ENCODE measurements at regions of chr2 and their contacts with region 1.

Region 1: GRCh38 chr2:218979846-218980734 is 4.9 kb downstream of the FEV start:
- DNase-seq: peak; percentile 87
- ATAC-seq: peak; percentile 94
- H3K4me3 Mint-ChIP-seq: no peak overlapping the region
- H3K27ac Mint-ChIP-seq: no peak overlapping the region
- H3K4me1 Mint-ChIP-seq: peaks cover 10% of the 10 kb centered on the region
- H3K27me3 Mint-ChIP-seq: peaks cover 83% of the 10 kb centered on the region

Region 2: DNA sequence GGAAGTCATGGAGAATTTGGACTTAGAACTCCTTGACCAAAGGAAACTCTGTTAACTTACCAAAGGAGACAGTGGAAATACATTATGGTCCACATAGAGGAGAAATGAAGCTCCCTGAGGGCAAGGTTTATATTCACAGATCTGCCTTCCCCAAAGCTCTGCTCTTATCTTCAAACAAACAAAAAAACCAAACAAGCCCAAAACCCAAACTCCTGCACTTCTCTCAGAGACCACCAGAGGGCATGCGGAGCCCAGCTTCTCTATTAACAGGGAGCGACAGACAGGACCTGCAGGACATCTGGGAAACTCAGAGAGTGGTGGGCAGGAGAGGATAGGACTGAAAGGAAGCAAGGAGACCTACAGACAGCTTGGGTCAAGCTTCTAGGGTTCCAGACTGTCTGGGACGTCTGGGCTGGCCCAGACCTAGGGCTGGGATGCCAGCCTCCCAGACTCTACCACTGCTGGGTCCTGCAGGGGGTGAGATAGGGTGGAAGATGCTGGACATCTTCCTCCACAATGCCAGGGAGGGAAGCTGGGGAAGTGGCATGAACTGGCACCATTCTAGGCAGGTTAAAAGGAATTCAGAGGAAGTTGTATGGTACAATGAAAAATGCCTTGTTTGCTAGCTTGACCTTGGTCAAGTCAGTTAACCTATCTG is 103.4 kb before region 1 on chr2:
- CTCF ChIA-PET with region 1: interaction called, 31 read pairs
- DNase-seq: peak; percentile 71
- ATAC-seq: no peak
- H3K4me3 Mint-ChIP-seq: no peak overlapping the region
- H3K27ac Mint-ChIP-seq: no peak overlapping the region
- H3K4me1 Mint-ChIP-seq: peaks cover 17% of the 10 kb centered on the region
- H3K27me3 Mint-ChIP-seq: peaks cover 78% of the 10 kb centered on the region

Region 3: DNA sequence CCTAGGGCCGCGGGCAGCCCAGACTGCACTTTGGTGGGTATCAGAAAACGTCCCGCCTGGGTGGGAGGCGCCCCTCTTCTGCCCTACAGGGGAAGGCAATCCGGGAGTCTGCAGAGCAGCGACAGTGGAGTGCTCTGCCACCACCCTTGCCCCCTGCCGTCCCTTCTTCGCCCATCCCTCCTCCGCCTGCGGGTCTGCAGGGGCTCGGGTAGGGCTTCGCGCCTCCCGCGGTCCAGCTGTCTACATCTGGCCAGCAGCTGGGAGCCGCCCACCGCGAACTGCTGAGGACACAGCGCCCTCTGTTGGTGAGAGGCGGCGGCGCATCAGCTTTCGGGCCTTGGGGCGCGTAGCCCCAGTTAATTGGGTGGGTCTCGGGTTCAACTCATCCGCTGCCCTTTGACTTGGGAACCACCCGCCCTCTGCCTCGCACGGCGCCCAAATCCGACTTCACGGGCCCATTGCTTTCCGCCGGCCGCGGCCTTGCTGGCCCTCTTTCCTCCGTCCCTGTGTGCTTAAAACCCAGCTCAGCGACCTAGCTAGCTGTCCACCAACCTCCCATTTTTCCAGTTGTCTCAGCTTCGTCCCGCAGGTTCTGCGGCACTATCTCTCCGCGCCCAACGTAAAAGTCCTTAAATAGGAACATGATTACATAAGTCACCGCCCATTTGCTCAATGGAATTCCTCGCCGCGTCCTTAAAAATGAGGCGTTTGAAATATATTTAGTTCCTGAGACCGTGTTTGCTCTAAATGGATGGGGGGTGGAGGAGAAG is 81.8 kb before region 1 on chr2:
- CTCF ChIA-PET with region 1: interaction called, 13 read pairs
- DNase-seq: peak; percentile 84
- ATAC-seq: peak; percentile 57
- H3K4me3 Mint-ChIP-seq: no peak overlapping the region
- H3K27ac Mint-ChIP-seq: no peak overlapping the region
- H3K4me1 Mint-ChIP-seq: peaks cover 39% of the 10 kb centered on the region
- H3K27me3 Mint-ChIP-seq: peaks cover 64% of the 10 kb centered on the region

Region 4: DNA sequence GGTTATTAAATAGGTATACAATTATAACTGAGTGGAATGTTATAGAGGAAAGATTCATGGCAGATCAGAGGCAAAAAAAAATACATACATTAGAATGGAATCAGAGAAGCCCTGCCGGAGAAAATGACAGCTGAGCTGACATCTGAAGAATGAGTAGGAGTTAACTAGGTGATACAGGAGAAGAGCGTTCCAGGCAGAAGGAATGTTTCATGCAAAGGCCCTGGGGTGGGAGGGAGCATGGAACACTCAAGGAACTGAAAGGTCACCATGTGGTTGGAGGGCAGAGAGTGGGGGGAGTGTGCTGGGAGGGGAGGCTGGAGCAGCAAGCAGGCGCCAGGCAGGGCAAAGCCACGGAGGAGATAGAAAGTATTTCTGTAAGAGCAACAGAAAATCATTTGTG is 52.2 kb before region 1 on chr2:
- CTCF ChIA-PET with region 1: no interaction called
- DNase-seq: no peak
- ATAC-seq: no peak
- H3K4me3 Mint-ChIP-seq: no peak overlapping the region
- H3K27ac Mint-ChIP-seq: no peak overlapping the region
- H3K4me1 Mint-ChIP-seq: no peaks in the 10 kb centered on the region
- H3K27me3 Mint-ChIP-seq: peaks cover 32% of the 10 kb centered on the region

Region 5: GRCh38 chr2:218995972-218996711 is 16.1 kb after region 1 on chr2:
- CTCF ChIA-PET with region 1: interaction called, 74 read pairs
- DNase-seq: peak; percentile 80
- ATAC-seq: peak; percentile 66
- H3K4me3 Mint-ChIP-seq: no peak overlapping the region
- H3K27ac Mint-ChIP-seq: no peak overlapping the region
- H3K4me1 Mint-ChIP-seq: peaks cover 2% of the 10 kb centered on the region
- H3K27me3 Mint-ChIP-seq: peaks cover 84% of the 10 kb centered on the region

Region 6: GRCh38 chr2:219029829-219030165 is 49.7 kb after region 1 on chr2:
- CTCF ChIA-PET with region 1: interaction called, 13 read pairs
- DNase-seq: peak; percentile 78
- ATAC-seq: peak; percentile 88
- H3K4me3 Mint-ChIP-seq: no peak overlapping the region
- H3K27ac Mint-ChIP-seq: no peak overlapping the region
- H3K4me1 Mint-ChIP-seq: no peaks in the 10 kb centered on the region
- H3K27me3 Mint-ChIP-seq: peaks cover 25% of the 10 kb centered on the region

Region 7: DNA sequence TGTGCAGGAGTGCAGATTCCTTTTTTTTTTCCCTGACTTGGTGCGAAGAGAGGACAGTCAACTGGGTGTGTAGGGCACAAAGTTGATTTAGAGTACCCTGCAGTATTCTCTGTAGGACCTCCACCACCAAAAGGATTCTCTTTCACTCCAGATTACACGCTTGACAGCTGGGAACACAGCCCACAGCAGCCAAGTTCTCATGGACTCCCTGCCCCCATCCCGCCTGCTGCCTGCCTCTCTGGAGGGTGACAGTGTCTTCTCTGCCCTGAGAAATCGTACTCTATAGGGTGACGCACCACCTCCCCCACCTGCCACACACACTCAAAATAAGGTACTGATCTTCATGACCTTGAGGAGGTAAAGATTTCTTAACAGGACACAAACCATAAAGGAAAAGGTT is 107.3 kb after region 1 on chr2:
- CTCF ChIA-PET with region 1: no interaction called
- DNase-seq: no peak
- ATAC-seq: no peak
- H3K4me3 Mint-ChIP-seq: no peak overlapping the region
- H3K27ac Mint-ChIP-seq: no peak overlapping the region
- H3K4me1 Mint-ChIP-seq: peaks cover 16% of the 10 kb centered on the region
- H3K27me3 Mint-ChIP-seq: no peaks in the 10 kb centered on the region

Measured in activated CD8-positive, alpha-beta memory T cell treated with anti-CD3 and anti-CD28 coated beads, Interleukin-2, amount 10 ng/mL, durations not matched to agents 7 days and 5 days (primary cell).